ENCODE measurements at regions of chr6 and their contacts with region 1.

Region 1: GRCh38 chr6:133130863-133131262 is 110.3 kb upstream of the EYA4 start:
- DNase-seq: peak; percentile 77 to 93 (median 84)
- ATAC-seq: peak; percentile 98 to 99 (median 98)
- H3K4me3 ChIP-seq: no peak overlapping the region
- H3K27ac ChIP-seq: peak overlapping the region; percentile 22 to 86 (median 68)
- H3K4me1 ChIP-seq: peaks cover 0 to 23% (median 1%) of the 10 kb centered on the region in 12 donors
- H3K27me3 ChIP-seq: no peaks in the 10 kb centered on the region
- CTCF ChIP-seq: peak in 6 of 12 donors; percentile 4 to 42 (median 30)
- POLR2A ChIP-seq: no peak

Region 2: DNA sequence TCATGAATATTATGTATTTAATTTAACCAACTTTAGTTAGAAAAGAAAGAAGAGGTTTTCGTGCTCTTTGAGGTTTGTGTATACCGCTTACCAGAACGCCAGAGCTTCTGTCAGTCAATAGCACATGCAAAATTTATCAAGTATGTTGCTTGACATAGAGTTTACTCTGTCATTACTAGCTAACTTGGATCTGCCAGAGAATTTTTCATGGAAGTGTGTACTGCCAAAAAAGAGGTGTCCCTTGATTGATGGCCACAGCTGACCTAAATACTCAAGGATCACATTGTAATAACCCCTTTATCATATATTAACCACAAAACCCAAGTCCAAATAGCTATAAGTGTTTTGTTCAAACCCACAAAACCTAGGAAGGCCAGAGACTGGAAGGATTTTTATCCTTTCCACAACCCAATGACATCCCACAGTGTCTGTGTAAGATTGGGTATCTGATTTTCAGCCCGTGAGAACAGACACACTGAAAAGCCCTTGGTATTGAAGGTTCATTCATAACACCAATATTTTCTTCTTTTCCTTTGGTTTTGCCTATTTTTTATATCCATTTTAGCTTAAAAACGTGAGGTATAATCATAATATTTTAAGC is 83.7 kb before region 1 on chr6:
- intact Hi-C with region 1: loop called in 1 of 10 experiments (anchors 5 kb)
- DNase-seq: peak in 1 of 5 donors; percentile 8
- ATAC-seq: peak; percentile 83 to 95 (median 90)
- H3K4me3 ChIP-seq: no peak overlapping the region
- H3K27ac ChIP-seq: peak overlapping the region in 8 of 12 donors; percentile 24 to 65 (median 30)
- H3K4me1 ChIP-seq: peaks cover 0 to 20% (median 0%) of the 10 kb centered on the region in 12 donors
- H3K27me3 ChIP-seq: no peaks in the 10 kb centered on the region
- CTCF ChIP-seq: no peak
- POLR2A ChIP-seq: no peak

Region 3: GRCh38 chr6:133062077-133062476 is 68.8 kb before region 1 on chr6:
- intact Hi-C with region 1: loop called in 4 of 10 experiments (anchors 2 to 10 kb)
- DNase-seq: peak in 4 of 5 donors; percentile 30 to 48 (median 43)
- ATAC-seq: peak; percentile 93 to 98 (median 97)
- H3K4me3 ChIP-seq: no peak overlapping the region
- H3K27ac ChIP-seq: peak overlapping the region in 11 of 12 donors; percentile 34 to 81 (median 72)
- H3K4me1 ChIP-seq: peaks cover 0 to 17% (median 2%) of the 10 kb centered on the region in 12 donors
- H3K27me3 ChIP-seq: no peaks in the 10 kb centered on the region
- CTCF ChIP-seq: no peak
- POLR2A ChIP-seq: no peak

Region 4: DNA sequence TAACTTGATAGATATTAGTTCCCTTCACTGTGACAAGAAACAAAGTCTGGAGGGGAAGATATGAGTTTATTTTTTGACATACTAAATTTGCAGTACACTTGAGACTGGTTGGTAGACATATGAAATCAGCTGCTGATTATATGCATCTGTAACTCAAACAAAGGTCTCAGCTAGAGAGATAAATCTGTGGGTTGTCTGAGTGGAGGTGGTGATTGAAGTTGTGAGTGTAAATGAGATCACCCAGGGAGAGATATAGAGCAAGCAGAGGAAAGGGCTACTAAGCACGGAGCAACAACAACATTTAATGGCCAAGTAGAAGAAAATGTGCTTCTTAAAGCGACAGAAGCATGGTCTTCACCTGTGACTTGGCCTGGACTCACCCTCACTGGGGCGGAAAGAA is 62.9 kb before region 1 on chr6:
- intact Hi-C with region 1: loop called in 4 of 10 experiments (anchors 2 to 10 kb)
- DNase-seq: no peak
- ATAC-seq: peak; percentile 60 to 97 (median 85)
- H3K4me3 ChIP-seq: no peak overlapping the region
- H3K27ac ChIP-seq: peak overlapping the region in 9 of 12 donors; percentile 8 to 75 (median 44)
- H3K4me1 ChIP-seq: peaks cover 0 to 4% (median 0%) of the 10 kb centered on the region in 12 donors
- H3K27me3 ChIP-seq: no peaks in the 10 kb centered on the region
- CTCF ChIP-seq: no peak
- POLR2A ChIP-seq: no peak